Spleen (tissue), 13 donors: ENCODE measurements at regions of chr16 and their contacts with region 1.

Region 1: GRCh38 chr16:50806099-50807062 is 64.5 kb downstream of the CYLD start:
- DNase-seq: peak; percentile 90
- H3K4me3 ChIP-seq: peak overlapping the region in 4 of 8 donors; percentile 17 to 63 (median 32)
- H3K27ac ChIP-seq: peak overlapping the region in 6 of 8 donors; percentile 1 to 74 (median 62)
- H3K4me1 ChIP-seq: peaks cover 3 to 14% (median 12%) of the 10 kb centered on the region in 6 donors
- H3K27me3 ChIP-seq: no peaks in the 10 kb centered on the region
- CTCF ChIP-seq: peak; percentile 78 to 97 (median 94)
- POLR2A ChIP-seq: no peak

Region 2: GRCh38 chr16:50368410-50369132 is 437.8 kb before region 1 on chr16 and contains the start of gene BRD7:
- intact Hi-C with region 1: loop called (anchors 10 kb)
- DNase-seq: peak; percentile 92
- H3K4me3 ChIP-seq: peak within 1 kb of the TSS; percentile 86 to 100 (median 96)
- H3K27ac ChIP-seq: peak within 1 kb of the TSS; percentile 60 to 89 (median 78)
- H3K4me1 ChIP-seq: peaks cover 25 to 57% (median 42%) of the 10 kb centered on the region in 6 donors
- H3K27me3 ChIP-seq: no peaks in the 10 kb centered on the region
- CTCF ChIP-seq: peak in 7 of 11 experiments; percentile 49 to 88 (median 69)
- POLR2A ChIP-seq: no peak
- total RNA-seq, gene BRD7: 47.4 to 69.7 (median 59.1) TPM